ENCODE measurements at regions of chr15 and their contacts with region 1.

Region 1: DNA sequence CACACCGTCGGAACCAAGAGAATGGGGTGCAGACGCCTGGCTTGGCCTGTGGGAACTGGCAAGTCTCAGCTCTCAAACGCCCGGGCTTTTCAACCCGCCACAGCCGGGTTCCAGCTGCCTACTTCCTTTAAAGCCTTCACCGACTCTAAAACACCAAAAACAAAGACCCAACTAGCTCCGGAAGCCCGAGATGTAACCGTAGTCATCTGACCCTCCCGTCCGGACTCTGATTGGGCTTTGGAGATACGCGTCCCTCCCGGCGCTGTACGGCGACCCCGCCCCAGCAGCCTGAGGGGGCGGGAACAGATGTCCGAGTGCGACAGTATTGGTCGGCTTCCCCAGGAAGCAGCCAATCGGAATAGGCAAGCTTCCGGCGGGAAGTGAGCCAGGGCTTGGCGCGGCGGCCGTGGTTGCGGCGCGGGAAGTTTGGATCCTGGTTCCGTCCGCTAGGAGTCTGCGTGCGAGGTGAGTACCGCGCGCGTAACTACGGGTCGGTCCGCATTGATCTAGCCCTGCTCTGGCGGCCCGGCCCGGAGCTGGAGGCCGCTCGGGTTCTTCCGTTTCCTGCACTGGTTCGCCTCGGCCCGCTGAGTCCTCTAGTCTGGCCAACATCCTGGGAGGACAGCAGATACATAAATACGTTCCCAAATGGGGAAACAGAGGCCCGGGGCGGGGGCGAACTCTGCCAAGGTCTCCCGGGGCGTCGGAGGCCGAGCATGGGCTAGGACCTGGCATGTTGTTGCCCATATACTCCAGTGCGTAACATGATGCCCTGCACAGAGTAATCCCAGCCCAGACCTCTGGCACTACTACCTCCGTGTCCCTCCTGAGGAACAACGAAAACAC is at the start of gene BLM:
- DNase-seq: peak; percentile 99

Region 2: GRCh38 chr15:90706394-90707327 is 10.5 kb before region 1 on chr15:
- CTCF ChIA-PET with region 1: interaction called, 3 read pairs
- POLR2A ChIA-PET with region 1: interaction called, 15 read pairs
- DNase-seq: no peak

Region 3: DNA sequence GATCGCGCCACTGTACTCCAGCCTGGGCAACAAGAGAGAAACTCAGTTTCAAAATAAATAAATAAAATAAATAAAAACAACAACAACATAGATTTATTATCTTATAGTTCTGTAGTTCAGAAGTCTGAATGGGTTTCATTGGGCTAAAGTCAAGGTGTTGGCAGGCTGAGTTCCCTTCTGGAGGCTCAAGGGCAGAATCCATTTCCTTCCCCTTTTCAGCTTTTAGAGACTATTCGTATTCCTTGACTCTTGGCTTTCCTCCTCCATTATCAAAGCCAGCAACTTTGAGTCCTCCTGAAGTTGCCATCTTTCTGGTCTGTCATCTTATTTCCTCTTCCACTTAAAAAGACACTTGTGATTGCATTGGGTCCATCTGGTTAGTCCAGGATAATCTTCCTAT is 12.1 kb after region 1 on chr15:
- CTCF ChIA-PET with region 1: no interaction called
- POLR2A ChIA-PET with region 1: interaction called, 23 read pairs
- DNase-seq: no peak

Region 4: DNA sequence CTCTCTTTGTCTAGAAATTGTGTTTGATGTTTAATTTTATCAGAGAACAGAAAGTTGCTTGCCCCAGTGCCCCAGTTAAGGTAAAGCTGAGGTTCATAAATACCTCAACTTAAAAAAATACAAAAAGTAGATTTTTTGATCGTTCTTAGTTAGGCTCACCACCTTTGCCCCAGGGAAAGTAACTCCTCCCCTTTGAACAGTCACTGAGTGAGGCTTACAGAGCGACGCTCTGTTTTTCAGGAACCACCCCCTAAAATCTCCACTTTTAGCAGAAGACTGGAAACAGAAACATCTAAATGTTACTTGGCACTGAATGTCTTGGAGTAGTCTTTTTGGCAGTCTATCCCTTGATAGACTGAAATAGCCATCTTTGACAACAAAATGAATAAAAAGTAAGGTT is 24.9 kb after region 1 on chr15:
- CTCF ChIA-PET with region 1: interaction called, 3 read pairs
- POLR2A ChIA-PET with region 1: interaction called, 23 read pairs
- DNase-seq: no peak

Region 5: GRCh38 chr15:90872486-90873379 is 155.5 kb after region 1 on chr15:
- CTCF ChIA-PET with region 1: no interaction called
- POLR2A ChIA-PET with region 1: interaction called, 10 read pairs
- DNase-seq: peak; percentile 42

Measured in HEK293T (cell line).